Ascending aorta (tissue), 2 donors: ENCODE measurements at regions of chr18 and their contacts with region 1.

Region 1: GRCh38 chr18:61893971-61894750 is 1.4 kb upstream of the RNF152 start:
- DNase-seq: peak; percentile 43 to 89
- H3K4me3 ChIP-seq: peak overlapping the region; percentile 93 to 95
- H3K27ac ChIP-seq: peak overlapping the region; percentile 80 to 84
- H3K4me1 ChIP-seq: peaks cover 0 to 9% of the 10 kb centered on the region in 2 donors
- H3K27me3 ChIP-seq: no peaks in the 10 kb centered on the region
- CTCF ChIP-seq: peak; percentile 30 to 70 (median 37)

Region 2: GRCh38 chr18:61502472-61502871 is 391.7 kb before region 1 on chr18:
- intact Hi-C with region 1: no loop called
- DNase-seq: no peak
- H3K4me3 ChIP-seq: no peak overlapping the region
- H3K27ac ChIP-seq: no peak overlapping the region
- H3K4me1 ChIP-seq: no peaks in the 10 kb centered on the region
- H3K27me3 ChIP-seq: no peaks in the 10 kb centered on the region
- CTCF ChIP-seq: peak in 2 of 3 experiments; percentile 60 to 63

Region 3: GRCh38 chr18:61635901-61636528 is 258.1 kb before region 1 on chr18:
- intact Hi-C with region 1: loop called (anchors 1 kb)
- DNase-seq: peak in 1 of 2 donors; percentile 72
- H3K4me3 ChIP-seq: no peak overlapping the region
- H3K27ac ChIP-seq: no peak overlapping the region
- H3K4me1 ChIP-seq: peaks cover 0 to 6% of the 10 kb centered on the region in 2 donors
- H3K27me3 ChIP-seq: no peaks in the 10 kb centered on the region
- CTCF ChIP-seq: peak; percentile 60 to 93 (median 84)

Region 4: GRCh38 chr18:61851940-61852451 is 42.2 kb before region 1 on chr18:
- intact Hi-C with region 1: loop called (anchors 2 kb)
- DNase-seq: peak in 1 of 2 donors; percentile 84
- H3K4me3 ChIP-seq: no peak overlapping the region
- H3K27ac ChIP-seq: peak overlapping the region; percentile 31 to 67
- H3K4me1 ChIP-seq: peaks cover 0 to 12% of the 10 kb centered on the region in 2 donors
- H3K27me3 ChIP-seq: no peaks in the 10 kb centered on the region
- CTCF ChIP-seq: peak in 1 of 3 experiments; percentile 15

Region 5: DNA sequence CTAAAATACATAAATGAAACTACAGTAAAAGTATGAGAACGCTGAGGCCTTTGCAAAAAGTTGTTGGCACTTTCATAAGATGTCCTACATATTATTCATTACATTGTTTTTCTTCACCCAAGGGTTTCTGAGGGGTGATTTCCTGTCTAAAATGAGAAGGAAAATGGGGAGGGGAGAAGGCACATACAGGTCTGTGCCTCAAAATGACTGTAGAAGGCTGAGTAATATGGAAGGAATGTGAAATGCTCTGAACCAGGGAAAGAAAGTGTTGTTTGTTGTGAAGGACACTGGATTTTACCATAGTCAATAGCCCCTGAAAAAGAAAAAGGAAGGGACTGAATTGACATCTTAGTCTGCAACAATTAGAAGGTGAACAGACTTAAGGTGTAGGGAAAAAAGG is 98.1 kb after region 1 on chr18:
- intact Hi-C with region 1: loop called (anchors 5 kb)
- DNase-seq: no peak
- H3K4me3 ChIP-seq: no peak overlapping the region
- H3K27ac ChIP-seq: peak overlapping the region; percentile 60 to 67
- H3K4me1 ChIP-seq: peaks cover 8 to 25% of the 10 kb centered on the region in 2 donors
- H3K27me3 ChIP-seq: no peaks in the 10 kb centered on the region
- CTCF ChIP-seq: no peak

Region 6: GRCh38 chr18:62131301-62131909 is 237.2 kb after region 1 on chr18:
- intact Hi-C with region 1: loop called (anchors 2 kb)
- DNase-seq: peak in 1 of 2 donors; percentile 65
- H3K4me3 ChIP-seq: no peak overlapping the region
- H3K27ac ChIP-seq: no peak overlapping the region
- H3K4me1 ChIP-seq: peaks cover 0 to 3% of the 10 kb centered on the region in 2 donors
- H3K27me3 ChIP-seq: no peaks in the 10 kb centered on the region
- CTCF ChIP-seq: peak; percentile 79 to 90 (median 89)